HEK293T (cell line): ENCODE measurements at regions of chr17 and their contacts with region 1.

Region 1: DNA sequence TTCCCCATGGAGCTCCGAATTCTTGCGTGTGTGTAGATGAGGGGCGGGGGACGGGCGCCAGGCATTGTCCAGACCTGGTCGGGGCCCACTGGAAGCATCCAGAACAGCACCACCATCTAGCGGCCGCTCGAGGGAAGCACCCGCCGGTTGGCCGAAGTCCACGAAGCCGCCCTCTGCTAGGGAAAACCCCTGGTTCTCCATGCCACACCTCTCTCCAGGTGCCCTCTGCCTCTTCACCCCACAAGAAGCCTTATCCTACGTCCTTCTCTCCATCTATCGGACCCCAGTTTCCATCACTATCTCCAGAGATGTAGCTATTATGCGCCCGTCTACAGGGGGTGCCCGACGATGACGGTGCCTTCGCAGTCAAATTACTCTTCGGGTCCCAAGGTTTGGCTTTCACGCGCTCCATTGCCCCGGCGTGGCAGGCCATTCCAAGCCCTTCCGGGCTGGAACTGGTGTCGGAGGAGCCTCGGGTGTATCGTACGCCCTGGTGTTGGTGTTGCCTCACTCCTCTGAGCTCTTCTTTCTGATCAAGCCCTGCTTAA is 617 bp upstream of the SENP3 start:
- DNase-seq: peak; percentile 87

Region 2: DNA sequence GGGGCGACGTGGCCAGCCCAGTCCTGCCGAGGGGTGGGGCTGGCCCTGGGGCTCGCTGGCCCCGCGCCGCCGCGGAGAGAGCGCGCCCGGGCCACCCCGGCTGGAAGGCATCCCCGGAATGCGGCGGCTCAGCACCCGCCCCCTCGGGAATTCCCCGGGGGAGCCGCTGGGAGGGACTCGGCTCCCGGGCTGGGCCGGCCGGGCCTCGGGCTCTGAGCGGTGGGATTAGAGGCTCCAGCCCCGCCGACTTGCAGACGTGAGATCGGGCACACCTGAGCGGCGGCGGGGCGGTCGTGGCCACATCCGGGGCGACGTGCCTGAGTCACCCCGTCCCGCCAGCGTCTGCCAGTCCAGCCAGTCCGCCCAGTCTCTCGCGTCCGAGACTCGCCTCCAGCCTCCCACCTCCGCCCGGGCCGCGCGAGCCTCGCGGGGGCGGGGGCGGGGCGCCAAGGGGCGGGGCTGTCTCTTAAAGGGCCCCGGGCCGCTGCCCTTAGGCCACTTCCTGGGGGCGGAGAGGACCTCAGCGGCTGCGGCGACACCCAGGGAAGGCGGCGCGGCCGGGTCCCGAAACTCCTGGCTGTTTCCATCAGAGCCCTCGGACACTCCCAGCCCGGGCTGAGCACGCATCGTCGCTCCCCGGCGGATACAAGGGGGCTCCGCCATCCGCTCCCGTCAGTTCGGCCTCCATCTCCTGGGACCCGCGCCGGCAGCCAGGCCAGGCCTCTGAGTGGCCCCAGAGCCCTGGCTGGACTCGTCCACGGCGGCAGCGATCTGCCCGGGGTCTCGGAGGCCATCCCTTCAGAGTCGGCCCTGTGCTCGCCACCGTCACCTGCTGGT is 209.2 kb before region 1 on chr17 and contains the start of gene KCTD11:
- CTCF ChIA-PET with region 1: interaction called, 4 read pairs
- POLR2A ChIA-PET with region 1: interaction called, 14 read pairs
- DNase-seq: peak; percentile 80

Region 3: GRCh38 chr17:7515911-7516610 is 45.0 kb before region 1 on chr17:
- CTCF ChIA-PET with region 1: interaction called, 43 read pairs
- POLR2A ChIA-PET with region 1: interaction called, 25 read pairs
- DNase-seq: no peak

Region 4: DNA sequence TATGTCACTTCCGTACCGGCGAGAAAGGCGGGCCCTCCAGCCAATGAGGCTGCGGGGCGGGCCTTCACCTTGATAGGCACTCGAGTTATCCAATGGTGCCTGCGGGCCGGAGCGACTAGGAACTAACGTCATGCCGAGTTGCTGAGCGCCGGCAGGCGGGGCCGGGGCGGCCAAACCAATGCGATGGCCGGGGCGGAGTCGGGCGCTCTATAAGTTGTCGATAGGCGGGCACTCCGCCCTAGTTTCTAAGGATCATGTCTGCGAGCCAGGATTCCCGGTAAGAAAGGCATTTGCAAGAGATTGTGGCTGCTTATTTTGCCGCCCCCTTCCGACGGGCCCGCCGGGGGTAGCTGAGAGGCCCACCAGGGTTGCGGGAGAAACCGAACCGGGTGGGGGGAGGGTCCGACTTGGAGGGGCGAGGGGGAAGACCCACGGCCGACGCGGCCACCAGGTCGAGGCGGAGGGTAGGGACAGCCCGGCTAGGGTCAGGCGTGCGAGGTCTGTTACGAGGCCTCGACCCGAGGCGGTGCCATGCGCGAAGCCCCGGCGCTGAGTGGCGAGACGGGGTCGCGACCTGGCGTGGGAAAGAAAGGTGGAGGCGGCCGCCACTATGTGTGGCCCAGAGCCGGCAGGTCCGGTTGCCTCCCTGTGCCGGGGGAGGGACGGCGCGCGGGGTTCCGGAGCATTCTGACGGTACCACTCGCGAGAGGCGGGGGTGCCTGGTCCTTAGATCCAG is 11.7 kb after region 1 on chr17:
- CTCF ChIA-PET with region 1: interaction called, 9 read pairs
- POLR2A ChIA-PET with region 1: interaction called, 13 read pairs
- DNase-seq: peak; percentile 98